CD8-positive, alpha-beta T cell (primary cell): ENCODE measurements at regions of chr16 and their contacts with region 1.

Region 1: DNA sequence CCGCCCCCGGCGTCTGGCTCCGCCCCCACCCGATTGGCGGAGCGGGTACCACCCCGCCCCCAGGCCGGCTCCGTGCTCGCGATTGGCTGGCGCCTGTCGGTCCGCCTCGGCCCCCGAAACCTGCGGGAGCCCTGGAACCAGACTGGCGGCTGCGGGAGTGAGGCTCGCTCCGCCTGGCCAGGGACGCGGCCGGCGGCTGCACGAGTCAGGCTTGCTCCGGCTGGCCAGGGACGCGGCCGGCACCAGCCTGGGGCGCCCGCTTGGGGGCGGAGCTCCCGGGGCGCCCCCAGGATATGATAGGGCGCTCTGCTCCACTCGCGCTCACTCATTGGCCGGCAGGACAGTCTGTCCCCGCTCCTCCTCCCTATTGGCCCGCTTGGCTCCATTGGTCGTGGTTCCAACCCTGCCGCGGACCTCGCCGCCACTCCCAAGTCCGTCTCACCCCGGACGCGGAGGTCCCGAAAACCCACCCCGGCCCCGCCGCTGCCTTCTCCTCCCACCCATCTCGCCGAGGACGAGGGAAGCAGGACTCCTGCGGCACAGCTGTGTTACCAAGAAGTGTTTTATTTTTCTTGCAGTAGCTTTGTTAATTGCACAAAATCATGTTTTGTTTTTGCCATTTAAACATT is 340 bp upstream of the ROGDI start:
- DNase-seq: peak; percentile 79 to 95 (median 88)
- ATAC-seq: peak; percentile 86
- H3K4me3 ChIP-seq: peak overlapping the region; percentile 60 to 89
- H3K4me3 Mint-ChIP-seq: peak overlapping the region; percentile 87
- H3K27ac ChIP-seq: peak overlapping the region; percentile 25 to 77
- H3K27ac Mint-ChIP-seq: peak overlapping the region; percentile 74
- H3K4me1 ChIP-seq: peaks cover 14% of the 10 kb centered on the region
- H3K4me1 Mint-ChIP-seq: peaks cover 11% of the 10 kb centered on the region
- H3K27me3 ChIP-seq: no peaks in the 10 kb centered on the region
- H3K27me3 Mint-ChIP-seq: no peaks in the 10 kb centered on the region
- CTCF ChIP-seq: no peak

Region 2: GRCh38 chr16:4766874-4767628 is 35.7 kb before region 1 on chr16 and contains the start of gene ZNF500:
- CTCF ChIA-PET with region 1: no interaction called
- POLR2A ChIA-PET with region 1: interaction called, 4 read pairs
- intact Hi-C with region 1: loop called (anchors 1 kb)
- DNase-seq: peak; percentile 89 to 98 (median 96)
- ATAC-seq: peak; percentile 90
- H3K4me3 ChIP-seq: peak within 1 kb of the TSS; percentile 77 to 83
- H3K4me3 Mint-ChIP-seq: peak within 1 kb of the TSS; percentile 91
- H3K27ac ChIP-seq: peak within 1 kb of the TSS; percentile 67 to 77
- H3K27ac Mint-ChIP-seq: peak within 1 kb of the TSS; percentile 81
- H3K4me1 ChIP-seq: peaks cover 22% of the 10 kb centered on the region
- H3K4me1 Mint-ChIP-seq: peaks cover 45% of the 10 kb centered on the region
- H3K27me3 ChIP-seq: no peaks in the 10 kb centered on the region
- H3K27me3 Mint-ChIP-seq: no peaks in the 10 kb centered on the region
- CTCF ChIP-seq: no peak
- total RNA-seq, gene ZNF500: 12.1 to 15.9 TPM

Region 3: DNA sequence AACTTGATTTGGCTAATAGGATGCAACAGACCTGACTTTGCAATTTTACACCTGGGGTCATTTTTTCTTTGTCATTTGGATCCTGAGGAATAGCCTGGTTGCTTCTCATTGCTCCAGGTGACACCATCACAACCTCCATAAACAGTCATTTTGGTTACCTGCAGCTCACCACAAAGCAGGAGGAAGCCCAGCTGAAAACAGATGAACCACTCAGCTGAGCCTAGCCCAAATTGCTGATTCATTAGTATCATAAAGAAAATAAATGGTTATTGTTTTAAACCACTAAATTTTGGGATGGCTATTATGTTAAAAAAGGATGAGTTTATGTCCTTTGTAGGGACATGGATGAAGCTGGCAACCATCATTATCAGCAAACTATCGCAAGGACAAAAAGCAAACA is 1135.8 kb after region 1 on chr16:
- CTCF ChIA-PET with region 1: no interaction called
- POLR2A ChIA-PET with region 1: no interaction called
- intact Hi-C with region 1: no loop called
- DNase-seq: no peak
- ATAC-seq: no peak
- H3K4me3 ChIP-seq: no peak overlapping the region
- H3K4me3 Mint-ChIP-seq: no peak overlapping the region
- H3K27ac ChIP-seq: no peak overlapping the region
- H3K27ac Mint-ChIP-seq: no peak overlapping the region
- H3K4me1 ChIP-seq: no peaks in the 10 kb centered on the region
- H3K4me1 Mint-ChIP-seq: no peaks in the 10 kb centered on the region
- H3K27me3 ChIP-seq: no peaks in the 10 kb centered on the region
- H3K27me3 Mint-ChIP-seq: no peaks in the 10 kb centered on the region
- CTCF ChIP-seq: no peak